ENCODE measurements at regions of chr2 and their contacts with region 1.

Region 1: DNA sequence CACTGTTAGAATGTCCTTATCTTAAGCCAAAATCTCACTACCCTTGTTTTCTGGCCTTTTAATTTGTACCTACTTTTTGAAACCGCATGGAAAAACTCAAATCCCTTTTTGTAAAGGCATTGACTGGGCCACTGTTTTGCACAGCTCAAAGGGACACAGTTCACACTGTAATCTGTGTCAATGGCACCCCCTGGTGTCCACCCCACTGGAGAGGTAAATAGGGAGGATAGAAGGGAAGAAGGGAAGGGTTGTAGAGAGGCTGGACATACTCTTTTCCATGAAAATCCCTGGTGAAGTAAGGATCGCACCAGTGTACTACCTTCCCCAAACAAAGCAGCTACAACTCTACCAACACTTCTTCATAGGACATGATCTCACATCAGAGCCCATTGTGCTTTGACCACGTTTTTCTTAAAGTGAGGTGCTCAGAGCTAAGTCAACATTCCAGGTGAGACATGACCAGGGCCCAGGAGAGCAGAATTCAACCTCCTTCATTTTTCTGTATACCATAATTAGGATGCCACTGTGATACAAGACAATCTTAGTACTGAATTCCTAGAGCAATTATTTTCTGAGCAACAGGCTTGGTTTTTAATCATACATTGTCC is 92.4 kb upstream of the RMDN2 start:
- DNase-seq: peak; percentile 60
- H3K4me3 Mint-ChIP-seq: no peak overlapping the region
- H3K27ac Mint-ChIP-seq: no peak overlapping the region
- H3K4me1 Mint-ChIP-seq: peaks cover 14% of the 10 kb centered on the region
- H3K27me3 Mint-ChIP-seq: no peaks in the 10 kb centered on the region

Region 2: GRCh38 chr2:37287966-37288365 is 544.7 kb before region 1 on chr2:
- intact Hi-C with region 1: loop called (anchors 2 kb)
- DNase-seq: no peak
- H3K4me3 Mint-ChIP-seq: no peak overlapping the region
- H3K27ac Mint-ChIP-seq: no peak overlapping the region
- H3K4me1 Mint-ChIP-seq: no peaks in the 10 kb centered on the region
- H3K27me3 Mint-ChIP-seq: no peaks in the 10 kb centered on the region

Region 3: DNA sequence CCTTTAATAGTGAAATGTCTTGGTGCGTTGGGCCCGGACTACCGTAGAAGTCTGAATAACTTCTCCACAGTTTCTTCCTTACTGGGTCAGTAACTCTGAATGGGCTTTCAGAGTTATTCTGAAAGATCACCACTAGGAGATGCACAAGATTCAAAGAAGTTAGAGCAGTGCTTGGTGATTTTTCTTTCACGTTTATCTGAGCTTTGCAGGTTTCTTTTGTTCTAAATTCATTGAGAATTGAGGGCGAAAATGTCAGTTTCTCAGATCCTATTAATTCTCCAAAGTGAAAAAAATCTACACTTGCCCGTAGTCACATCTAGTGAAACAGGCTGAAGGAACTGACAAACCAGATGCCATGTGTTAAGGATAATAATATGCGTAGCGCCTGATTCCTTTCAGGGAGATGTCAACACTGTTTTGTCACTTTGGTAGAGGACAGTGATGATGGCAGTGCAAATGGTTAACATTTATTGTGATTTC is 418.2 kb before region 1 on chr2:
- intact Hi-C with region 1: loop called (anchors 1 kb)
- DNase-seq: no peak
- H3K4me3 Mint-ChIP-seq: no peak overlapping the region
- H3K27ac Mint-ChIP-seq: no peak overlapping the region
- H3K4me1 Mint-ChIP-seq: no peaks in the 10 kb centered on the region
- H3K27me3 Mint-ChIP-seq: peaks cover 18% of the 10 kb centered on the region

Region 4: GRCh38 chr2:37549598-37549997 is 283.1 kb before region 1 on chr2:
- intact Hi-C with region 1: loop called (anchors 1 kb)
- DNase-seq: no peak
- H3K4me3 Mint-ChIP-seq: no peak overlapping the region
- H3K27ac Mint-ChIP-seq: no peak overlapping the region
- H3K4me1 Mint-ChIP-seq: peaks cover 11% of the 10 kb centered on the region
- H3K27me3 Mint-ChIP-seq: peaks cover 7% of the 10 kb centered on the region

Region 5: DNA sequence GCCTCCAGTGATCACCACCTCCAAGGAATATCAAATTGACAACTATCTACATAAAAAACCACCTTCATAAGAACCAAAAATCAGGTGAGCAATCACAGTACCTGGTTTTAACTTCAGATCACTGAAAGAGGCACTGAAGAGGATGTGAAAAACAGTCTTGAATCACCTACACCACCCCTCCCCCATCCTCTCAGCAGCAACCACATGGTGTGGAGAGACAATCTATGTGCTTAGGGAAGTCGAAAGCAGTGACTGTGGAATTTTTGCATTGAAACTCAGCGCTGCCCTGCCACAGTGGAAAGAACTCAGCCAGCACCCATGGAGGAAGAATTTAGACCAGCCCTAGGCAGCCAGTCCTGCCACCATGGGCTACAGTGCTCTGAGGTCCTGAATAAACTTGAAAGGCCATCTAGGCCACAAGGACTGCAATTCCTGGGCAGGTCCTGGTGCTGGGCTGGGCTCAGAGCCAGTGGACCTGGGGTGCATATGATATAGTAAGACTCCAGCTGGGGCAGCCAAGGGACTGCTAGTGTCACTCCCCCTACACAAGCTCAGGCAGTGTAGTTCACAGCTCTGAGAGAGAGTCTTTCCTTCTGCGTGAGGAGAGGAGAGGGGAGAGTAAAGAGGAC is 468.8 kb after region 1 on chr2:
- intact Hi-C with region 1: no loop called
- DNase-seq: no peak
- H3K4me3 Mint-ChIP-seq: no peak overlapping the region
- H3K27ac Mint-ChIP-seq: peak overlapping the region; percentile 58
- H3K4me1 Mint-ChIP-seq: peaks cover 36% of the 10 kb centered on the region
- H3K27me3 Mint-ChIP-seq: no peaks in the 10 kb centered on the region